ENCODE measurements at regions of chr9 and their contacts with region 1.

Region 1: DNA sequence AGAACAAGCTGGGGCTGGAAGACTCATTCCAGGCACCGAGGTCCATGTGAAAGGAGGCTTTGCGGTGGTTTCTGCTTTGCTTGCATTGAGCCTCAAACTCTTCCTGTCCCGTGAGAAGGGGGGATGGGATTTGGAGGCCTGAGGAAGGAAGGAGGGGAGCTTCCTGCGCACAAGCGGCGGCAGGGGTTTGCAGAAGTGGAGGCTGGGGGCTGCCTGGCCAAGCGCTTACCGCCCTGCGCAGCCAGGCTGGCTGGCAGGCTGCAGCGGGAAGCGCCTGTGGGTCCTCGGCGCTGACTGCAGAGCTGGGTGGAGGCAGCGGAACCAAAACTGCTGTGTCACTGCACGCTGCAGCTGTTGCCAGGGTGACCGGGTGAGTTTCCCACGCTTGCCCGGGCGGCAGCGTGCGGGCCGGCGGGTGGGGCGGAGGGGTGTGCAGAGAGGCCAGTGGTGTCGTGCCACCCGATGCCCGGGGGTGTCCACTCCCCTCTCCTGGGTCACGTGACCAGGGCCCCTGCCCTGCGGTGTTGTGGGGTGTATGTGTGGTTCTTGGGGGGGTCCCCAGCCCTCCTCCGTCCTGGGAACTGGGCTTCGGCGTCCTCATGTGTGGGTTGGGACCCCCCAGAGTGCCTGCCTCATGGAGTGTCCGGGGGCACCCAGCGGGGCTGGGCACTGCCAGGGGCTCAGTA is 81.0 kb downstream of the RXRA start:
- DNase-seq: peak; percentile 97 to 98
- ATAC-seq: peak; percentile 89
- H3K4me3 ChIP-seq: no peak overlapping the region
- H3K27ac ChIP-seq: peak overlapping the region in 1 of 2 donors; percentile 48
- H3K4me1 ChIP-seq: peaks cover 2 to 3% of the 10 kb centered on the region in 2 donors
- H3K27me3 ChIP-seq: no peaks in the 10 kb centered on the region

Region 2: GRCh38 chr9:134365791-134366688 is 41.2 kb before region 1 on chr9:
- intact Hi-C with region 1: loop called in 1 of 2 experiments (anchors 5 kb)
- DNase-seq: peak; percentile 94 to 95
- ATAC-seq: peak; percentile 84
- H3K4me3 ChIP-seq: no peak overlapping the region
- H3K27ac ChIP-seq: peak overlapping the region in 1 of 2 donors; percentile 2
- H3K4me1 ChIP-seq: no peaks in the 10 kb centered on the region
- H3K27me3 ChIP-seq: no peaks in the 10 kb centered on the region